Activated CD4-positive, alpha-beta memory T cell treated with anti-CD3 and anti-CD28 coated beads for 36 hours (primary cell): ENCODE measurements at regions of chr2 and their contacts with region 1.

Region 1: GRCh38 chr2:210002158-210003157 is at the start of gene RPE:
- DNase-seq: peak; percentile 98
- H3K4me3 Mint-ChIP-seq: peak within 1 kb of the TSS; percentile 96
- H3K27ac Mint-ChIP-seq: peak within 1 kb of the TSS; percentile 81
- H3K4me1 Mint-ChIP-seq: peaks cover 51% of the 10 kb centered on the region
- H3K27me3 Mint-ChIP-seq: peaks cover 3% of the 10 kb centered on the region
- total RNA-seq, gene RPE: 46.3 to 48.0 TPM

Region 2: GRCh38 chr2:210171309-210172203 is 169.1 kb after region 1 on chr2 and contains the start of gene KANSL1L:
- CTCF ChIA-PET with region 1: interaction called, 5 read pairs
- POLR2A ChIA-PET with region 1: interaction called, 4 read pairs
- intact Hi-C with region 1: loop called (anchors 1 kb)
- DNase-seq: peak; percentile 97
- H3K4me3 Mint-ChIP-seq: peak within 1 kb of the TSS; percentile 94
- H3K27ac Mint-ChIP-seq: peak within 1 kb of the TSS; percentile 96
- H3K4me1 Mint-ChIP-seq: peaks cover 26% of the 10 kb centered on the region
- H3K27me3 Mint-ChIP-seq: peaks cover 3% of the 10 kb centered on the region
- total RNA-seq, gene KANSL1L: 4.0 to 4.6 TPM